Prostate gland (tissue), 2 donors: ENCODE measurements at regions of chr18 and their contacts with region 1.

Region 1: DNA sequence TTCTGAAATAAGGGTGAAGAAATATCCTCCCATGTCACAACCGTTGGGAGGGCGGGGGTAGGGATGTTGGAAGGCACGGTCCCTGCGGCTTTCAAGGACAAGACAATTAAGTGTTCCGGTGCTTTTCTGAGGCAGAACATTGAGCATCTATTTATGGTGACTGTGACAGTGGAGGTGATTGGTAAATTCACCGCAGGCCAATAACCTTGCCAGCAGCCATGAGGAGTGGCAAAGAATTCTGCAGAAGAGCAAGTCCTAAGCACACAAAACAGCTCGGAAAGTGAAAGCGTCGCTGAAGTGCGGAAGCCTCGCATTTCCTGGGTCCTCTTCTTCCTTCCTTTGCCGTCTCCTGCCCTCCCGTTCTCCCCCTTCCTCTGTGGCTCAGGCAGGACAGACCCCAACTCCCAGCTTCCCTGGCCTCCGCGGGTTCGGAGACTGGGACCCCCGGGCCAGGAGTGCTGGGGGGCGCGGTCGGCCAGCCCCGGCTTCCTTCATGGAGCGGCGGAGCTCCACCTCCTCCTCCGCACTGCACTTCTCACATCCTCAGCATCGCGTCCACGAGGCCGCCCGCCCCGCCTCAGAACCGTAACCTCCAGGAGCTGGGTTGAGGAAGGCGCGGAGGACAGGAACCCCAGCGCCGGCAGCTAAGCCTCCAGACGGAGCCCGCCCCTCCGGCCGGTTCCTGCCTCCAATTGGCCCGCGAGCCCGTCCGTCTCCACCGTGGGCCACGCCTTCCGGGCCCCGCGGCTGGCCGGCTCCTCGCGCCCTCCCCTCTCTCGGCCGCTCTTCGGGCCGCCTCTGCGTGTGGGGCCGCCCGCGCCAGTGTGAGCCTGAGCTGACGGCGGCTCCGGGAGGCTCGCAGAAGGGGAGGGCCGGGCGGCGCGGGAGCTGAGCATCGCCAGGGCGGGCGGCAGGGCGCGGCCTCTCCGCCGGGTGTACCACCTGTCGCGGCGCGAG is at the start of gene ME2:
- DNase-seq: peak; percentile 91
- H3K4me3 ChIP-seq: peak within 1 kb of the TSS; percentile 78 to 89
- H3K27ac ChIP-seq: peak within 1 kb of the TSS; percentile 91 to 92
- H3K4me1 ChIP-seq: no peaks in the 10 kb centered on the region
- H3K27me3 ChIP-seq: no peaks in the 10 kb centered on the region
- CTCF ChIP-seq: no peak
- POLR2A ChIP-seq: peak; percentile 94
- total RNA-seq, gene ME2: 38.3 to 59.4 TPM

Region 2: GRCh38 chr18:50917021-50917420 is 38.4 kb after region 1 on chr18:
- intact Hi-C with region 1: no loop called
- DNase-seq: no peak
- H3K4me3 ChIP-seq: no peak overlapping the region
- H3K27ac ChIP-seq: no peak overlapping the region
- H3K4me1 ChIP-seq: no peaks in the 10 kb centered on the region
- H3K27me3 ChIP-seq: no peaks in the 10 kb centered on the region
- CTCF ChIP-seq: no peak
- POLR2A ChIP-seq: no peak

Region 3: GRCh38 chr18:50967714-50968661 is 89.4 kb after region 1 on chr18 and contains the start of gene ELAC1:
- intact Hi-C with region 1: loop called (anchors 5 kb)
- DNase-seq: peak; percentile 62
- H3K4me3 ChIP-seq: peak within 1 kb of the TSS; percentile 91 to 93
- H3K27ac ChIP-seq: peak within 1 kb of the TSS; percentile 96 to 98
- H3K4me1 ChIP-seq: peaks cover 5% of the 10 kb centered on the region
- H3K27me3 ChIP-seq: no peaks in the 10 kb centered on the region
- CTCF ChIP-seq: peak in 2 of 4 experiments; percentile 4 to 17
- POLR2A ChIP-seq: peak; percentile 71
- total RNA-seq, gene ELAC1: 7.1 to 16.0 TPM